ENCODE measurements at regions of chr1 and their contacts with region 1.

Region 1: DNA sequence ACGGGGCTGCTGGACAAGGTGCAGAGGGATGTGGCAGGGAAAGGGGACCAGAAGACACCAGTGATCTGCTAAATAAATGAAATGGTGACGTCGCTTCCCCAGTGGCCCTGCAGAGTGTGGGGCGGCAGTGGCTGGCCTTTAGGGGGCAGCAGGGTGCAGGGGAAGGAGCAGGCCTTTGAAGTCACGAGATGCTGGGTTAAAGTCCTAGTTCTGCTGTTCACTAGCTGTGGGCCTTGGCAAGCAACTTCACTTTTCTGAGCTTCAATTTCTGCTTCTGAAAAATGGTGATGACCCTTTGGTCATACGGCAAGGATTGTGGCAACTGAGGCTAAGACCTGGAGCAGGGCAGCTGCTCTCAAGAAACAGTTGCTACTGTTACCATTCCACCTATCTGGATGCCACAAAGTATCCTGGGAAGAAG is 9.2 kb upstream of the GALE start:
- DNase-seq: peak; percentile 86
- CTCF ChIP-seq: peak; percentile 97

Region 2: GRCh38 chr1:23777979-23778814 is 31.6 kb before region 1 on chr1 and contains the start of gene PITHD1:
- CTCF ChIA-PET with region 1: interaction called, 38 read pairs
- POLR2A ChIA-PET with region 1: interaction called, 6 read pairs
- DNase-seq: peak; percentile 97
- CTCF ChIP-seq: peak; percentile 5

Region 3: DNA sequence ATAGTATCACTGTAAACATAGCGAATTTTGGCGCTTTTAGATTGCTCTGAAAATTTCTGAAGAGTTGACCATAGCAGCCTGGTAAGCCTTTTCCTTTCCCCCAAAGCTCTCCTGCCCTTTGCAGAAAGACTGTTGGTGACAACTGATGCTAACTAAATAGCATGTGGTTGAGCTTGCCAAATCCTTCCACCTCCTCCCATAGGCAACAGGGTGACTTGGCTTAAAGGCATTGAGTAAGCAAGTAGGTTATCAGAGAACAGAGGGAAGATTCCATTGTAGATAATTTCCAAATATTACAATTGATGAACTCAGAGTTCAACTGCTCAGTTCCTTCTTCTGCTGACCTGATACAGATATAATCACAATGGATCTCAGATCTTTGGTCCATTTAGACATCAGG is 35.4 kb after region 1 on chr1:
- CTCF ChIA-PET with region 1: interaction called, 12 read pairs
- POLR2A ChIA-PET with region 1: no interaction called
- DNase-seq: no peak
- CTCF ChIP-seq: no peak

Region 4: GRCh38 chr1:23867953-23868556 is 58.3 kb after region 1 on chr1 and contains the start of gene FUCA1:
- CTCF ChIA-PET with region 1: interaction called, 69 read pairs
- POLR2A ChIA-PET with region 1: no interaction called
- DNase-seq: peak; percentile 98
- CTCF ChIP-seq: peak; percentile 94

Region 5: DNA sequence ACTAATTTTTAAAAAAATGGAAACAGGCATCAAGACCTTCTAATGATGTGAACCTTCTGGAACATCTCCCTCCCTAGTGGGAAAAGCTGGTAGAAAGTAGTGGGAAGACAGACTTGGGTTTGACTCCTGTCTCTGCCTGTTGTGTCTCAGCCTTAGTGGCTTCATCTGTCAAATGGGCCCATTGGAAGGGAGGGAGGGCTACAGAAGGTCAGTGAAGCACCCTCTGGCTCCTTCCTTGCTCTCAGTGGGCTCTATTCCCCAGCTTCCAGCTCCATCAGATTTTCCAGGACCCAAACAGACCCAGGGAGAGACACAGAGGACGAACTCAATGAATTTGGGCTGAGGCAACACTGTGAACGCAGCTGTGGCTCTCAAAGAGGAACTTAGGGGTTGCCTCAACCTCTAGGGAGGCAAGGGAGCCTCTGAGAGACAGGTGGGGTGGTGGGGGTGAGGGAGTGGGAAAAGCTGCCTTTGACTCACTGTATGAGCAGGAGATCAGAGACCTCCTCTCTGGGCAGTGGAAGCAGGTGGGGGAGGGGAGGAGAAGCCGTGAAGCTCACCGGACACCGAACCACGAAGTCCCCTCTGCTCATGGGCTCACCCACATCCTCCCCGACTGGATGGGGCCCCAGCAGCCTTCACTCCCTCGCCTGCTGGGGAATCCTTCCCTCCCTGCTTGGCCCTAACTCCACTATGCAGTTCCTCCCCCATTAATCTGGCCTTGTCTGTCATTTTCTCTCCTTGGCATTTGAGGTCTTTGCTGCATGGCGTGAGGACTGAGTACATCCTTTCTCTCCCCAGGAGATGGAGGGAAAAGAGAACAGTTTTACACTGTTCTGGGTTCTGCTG is 99.0 kb after region 1 on chr1:
- CTCF ChIA-PET with region 1: interaction called, 57 read pairs
- POLR2A ChIA-PET with region 1: no interaction called
- DNase-seq: peak; percentile 53
- CTCF ChIP-seq: no peak

Region 6: GRCh38 chr1:23930861-23931490 is 121.2 kb after region 1 on chr1:
- CTCF ChIA-PET with region 1: interaction called, 28 read pairs
- POLR2A ChIA-PET with region 1: no interaction called
- DNase-seq: peak; percentile 50
- CTCF ChIP-seq: no peak

Measured in GM10248 (cell line).